Activated CD4-positive, alpha-beta memory T cell treated with anti-CD3 and anti-CD28 coated beads for 36 hours (primary cell): ENCODE measurements at regions of chr7 and their contacts with region 1.

Region 1: DNA sequence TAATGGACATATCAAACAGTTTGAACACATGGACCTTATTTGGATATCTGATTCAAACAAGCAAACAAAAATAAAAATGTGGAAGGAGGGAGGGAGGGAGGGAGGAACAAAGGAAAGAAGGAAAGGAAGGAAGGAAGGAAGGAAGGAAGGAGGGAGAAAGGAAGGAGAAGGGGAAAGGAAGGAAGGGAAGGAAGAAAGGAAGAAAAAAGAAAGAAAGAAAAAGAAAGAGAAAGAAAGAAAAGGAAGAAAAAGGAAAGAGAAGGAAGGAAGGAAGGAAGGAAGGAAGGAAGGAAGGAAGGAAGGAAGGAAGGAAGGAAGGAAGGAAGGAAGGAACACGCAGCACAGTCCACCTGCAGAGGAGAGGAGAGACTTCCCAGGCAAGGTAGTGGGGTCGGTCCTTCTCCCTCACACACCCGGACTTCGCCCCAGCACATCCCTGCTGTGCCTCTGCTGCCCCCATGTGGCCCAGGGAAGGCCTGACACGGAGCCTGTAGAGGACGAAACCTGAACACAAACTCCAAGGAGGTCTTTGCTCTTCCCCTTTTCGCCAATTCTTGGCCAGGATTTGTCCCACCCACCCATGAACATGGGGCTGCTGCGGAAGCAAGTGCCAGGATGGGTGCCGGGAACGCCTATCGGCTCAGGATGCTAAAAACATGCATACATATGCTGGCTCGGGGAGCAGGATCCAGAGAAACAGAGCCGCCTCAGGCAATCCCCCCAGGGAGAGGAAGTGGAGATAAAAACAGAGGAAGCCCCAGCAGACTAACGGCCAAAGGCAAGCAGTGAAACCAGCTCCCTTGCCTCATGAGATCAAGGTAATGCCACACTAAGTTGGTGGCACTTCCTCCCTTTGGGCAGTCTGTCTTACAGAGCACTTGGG is 52.3 kb upstream of the DGKI start:
- DNase-seq: peak; percentile 84
- H3K4me3 Mint-ChIP-seq: no peak overlapping the region
- H3K27ac Mint-ChIP-seq: no peak overlapping the region
- H3K4me1 Mint-ChIP-seq: peaks cover 33% of the 10 kb centered on the region
- H3K27me3 Mint-ChIP-seq: no peaks in the 10 kb centered on the region

Region 2: DNA sequence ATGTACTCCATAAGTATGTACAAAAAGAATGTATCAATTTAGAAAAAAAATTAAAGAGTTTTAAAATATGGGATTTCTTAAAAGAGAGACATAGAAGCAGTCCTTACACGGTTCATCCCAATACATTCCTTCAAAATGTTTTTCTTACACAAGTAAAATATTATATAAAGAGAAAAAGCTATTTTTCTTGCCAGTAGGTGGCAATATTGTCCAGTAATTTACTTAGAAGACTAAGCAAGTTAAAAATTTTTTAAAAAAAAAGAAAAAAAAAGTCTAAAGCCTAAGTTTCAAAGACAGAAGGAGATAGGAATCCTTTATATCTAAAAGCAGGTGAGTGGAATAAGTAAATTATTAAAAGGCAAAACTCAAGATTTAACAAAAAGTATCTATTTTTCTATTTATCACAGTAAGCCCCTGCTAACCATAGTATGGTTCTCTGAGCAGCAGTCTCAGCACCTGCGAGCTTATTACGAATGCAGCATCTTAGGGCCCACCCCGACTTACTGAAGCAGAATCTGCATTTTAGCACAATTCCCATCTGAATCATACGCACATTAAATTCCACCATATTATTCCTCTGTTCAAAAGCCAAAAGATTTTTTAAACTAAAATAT is 292.9 kb before region 1 on chr7:
- CTCF ChIA-PET with region 1: interaction called, 9 read pairs
- POLR2A ChIA-PET with region 1: no interaction called
- intact Hi-C with region 1: loop called (anchors 2 kb)
- DNase-seq: no peak
- H3K4me3 Mint-ChIP-seq: no peak overlapping the region
- H3K27ac Mint-ChIP-seq: no peak overlapping the region
- H3K4me1 Mint-ChIP-seq: no peaks in the 10 kb centered on the region
- H3K27me3 Mint-ChIP-seq: peaks cover 10% of the 10 kb centered on the region

Region 3: DNA sequence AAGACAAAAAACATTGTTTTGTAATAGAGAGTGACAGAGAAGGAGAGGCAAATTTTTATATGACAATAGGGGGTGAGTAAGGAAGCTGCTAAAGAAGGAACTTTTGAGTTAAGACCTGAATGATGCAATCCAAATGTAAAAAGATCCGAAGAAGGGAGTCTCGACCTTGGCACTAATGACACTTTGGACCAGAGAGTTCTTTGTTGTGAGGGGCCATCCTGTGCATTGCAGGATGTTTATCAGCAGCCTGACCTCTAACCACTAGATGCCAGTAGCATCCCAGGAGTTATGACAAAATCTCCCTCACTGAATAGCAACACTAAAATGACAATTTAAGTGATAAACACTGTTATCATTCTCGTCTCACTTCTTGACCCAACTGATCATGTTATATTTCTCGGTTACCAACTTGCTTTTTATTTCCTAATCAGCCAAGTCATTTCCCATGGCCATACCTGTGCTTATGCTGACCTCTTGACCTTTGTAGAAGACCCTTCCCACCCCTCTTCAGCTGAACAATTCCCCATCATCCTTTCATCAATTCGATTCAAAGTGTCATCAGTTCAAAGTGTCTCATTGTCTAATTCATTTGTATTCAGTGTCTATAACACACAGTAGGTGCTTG is 82.3 kb before region 1 on chr7:
- CTCF ChIA-PET with region 1: no interaction called
- POLR2A ChIA-PET with region 1: no interaction called
- intact Hi-C with region 1: loop called (anchors 5 kb)
- DNase-seq: no peak
- H3K4me3 Mint-ChIP-seq: no peak overlapping the region
- H3K27ac Mint-ChIP-seq: no peak overlapping the region
- H3K4me1 Mint-ChIP-seq: no peaks in the 10 kb centered on the region
- H3K27me3 Mint-ChIP-seq: peaks cover 17% of the 10 kb centered on the region

Region 4: GRCh38 chr7:137916564-137916963 is 17.5 kb after region 1 on chr7:
- CTCF ChIA-PET with region 1: interaction called, 33 read pairs
- POLR2A ChIA-PET with region 1: no interaction called
- intact Hi-C with region 1: no loop called
- DNase-seq: no peak
- H3K4me3 Mint-ChIP-seq: no peak overlapping the region
- H3K27ac Mint-ChIP-seq: no peak overlapping the region
- H3K4me1 Mint-ChIP-seq: peaks cover 16% of the 10 kb centered on the region
- H3K27me3 Mint-ChIP-seq: no peaks in the 10 kb centered on the region

Region 5: DNA sequence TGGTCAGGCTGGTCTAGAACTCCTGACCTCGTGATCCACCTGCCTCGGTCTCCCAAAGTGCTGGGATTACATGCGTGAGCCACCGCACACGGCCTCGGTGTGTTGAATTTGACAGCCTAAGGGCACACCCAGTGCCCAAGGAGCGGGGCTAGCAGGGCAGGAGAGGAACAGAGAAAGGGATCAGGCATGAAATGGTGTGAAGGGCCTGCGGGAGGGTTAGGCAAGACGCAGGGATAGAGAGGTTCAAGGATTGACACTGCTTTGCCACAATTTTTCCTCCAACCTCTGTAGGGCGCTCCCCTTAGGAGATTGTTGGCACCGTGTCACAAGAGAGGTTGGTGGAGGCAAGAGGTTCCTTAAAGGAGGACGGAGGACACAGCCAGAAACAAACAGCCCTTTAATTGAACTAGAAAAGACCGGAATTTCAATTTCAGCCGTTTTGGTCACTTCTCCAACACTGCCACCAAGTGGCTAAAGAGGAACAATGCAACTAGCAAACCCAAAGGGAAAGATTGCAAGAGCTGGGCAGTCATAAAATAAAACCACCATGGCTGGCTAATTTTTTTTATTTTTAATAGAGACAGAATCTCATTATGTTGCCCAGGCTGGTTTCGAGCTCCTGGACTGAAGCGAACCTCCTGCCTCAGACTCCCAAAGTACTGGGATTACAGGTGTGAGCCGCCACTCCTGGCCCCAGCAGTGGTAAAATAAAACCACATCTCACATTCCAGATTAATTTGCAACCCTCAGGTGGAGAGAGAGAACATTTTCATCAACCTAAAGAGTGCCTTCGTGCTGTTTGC is 109.7 kb after region 1 on chr7:
- CTCF ChIA-PET with region 1: interaction called, 433 read pairs
- POLR2A ChIA-PET with region 1: no interaction called
- intact Hi-C with region 1: loop called (anchors 1 kb)
- DNase-seq: peak; percentile 37
- H3K4me3 Mint-ChIP-seq: no peak overlapping the region
- H3K27ac Mint-ChIP-seq: no peak overlapping the region
- H3K4me1 Mint-ChIP-seq: peaks cover 4% of the 10 kb centered on the region
- H3K27me3 Mint-ChIP-seq: no peaks in the 10 kb centered on the region

Region 6: GRCh38 chr7:138195151-138195585 is 296.1 kb after region 1 on chr7:
- CTCF ChIA-PET with region 1: no interaction called
- POLR2A ChIA-PET with region 1: no interaction called
- intact Hi-C with region 1: no loop called
- DNase-seq: no peak
- H3K4me3 Mint-ChIP-seq: no peak overlapping the region
- H3K27ac Mint-ChIP-seq: no peak overlapping the region
- H3K4me1 Mint-ChIP-seq: no peaks in the 10 kb centered on the region
- H3K27me3 Mint-ChIP-seq: peaks cover 8% of the 10 kb centered on the region

Region 7: DNA sequence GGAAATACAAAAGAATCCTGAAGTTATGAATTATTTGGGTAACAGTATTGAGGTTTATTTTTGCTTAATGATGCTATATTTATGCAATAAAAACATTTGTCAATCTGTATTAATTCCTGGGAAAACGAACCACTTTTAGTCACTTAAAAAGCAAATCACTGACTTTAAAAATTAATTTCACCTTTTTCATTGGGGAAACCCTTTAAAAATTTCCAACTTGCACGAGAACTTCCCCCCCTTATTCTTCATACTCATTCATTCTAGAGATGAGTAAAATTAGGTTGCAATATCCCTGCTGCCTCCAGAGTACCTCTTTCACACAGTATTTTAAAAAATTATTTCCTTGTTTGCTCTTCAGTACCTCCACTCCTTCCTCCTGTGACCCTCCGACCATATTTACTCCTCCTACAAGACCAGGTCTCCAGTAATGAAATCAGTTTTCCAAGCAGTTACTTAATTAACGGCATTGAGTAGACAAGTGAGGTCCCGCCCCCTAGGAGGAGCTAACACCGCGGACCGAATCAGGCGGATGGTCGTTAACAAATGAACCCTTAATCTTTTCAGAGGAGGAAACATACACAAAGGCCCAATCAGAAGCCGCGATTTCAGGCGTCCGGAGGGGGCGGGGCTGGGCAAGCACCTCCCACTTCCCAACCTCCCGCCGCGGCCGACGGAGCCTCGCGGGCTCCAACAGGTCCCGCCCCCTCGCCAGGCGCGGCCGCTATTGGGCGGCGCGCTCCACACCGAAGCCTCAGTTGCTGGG is 560.5 kb after region 1 on chr7:
- CTCF ChIA-PET with region 1: interaction called, 3 read pairs
- POLR2A ChIA-PET with region 1: no interaction called
- intact Hi-C with region 1: loop called (anchors 10 kb)
- DNase-seq: peak; percentile 98
- H3K4me3 Mint-ChIP-seq: peak overlapping the region; percentile 90
- H3K27ac Mint-ChIP-seq: peak overlapping the region; percentile 65
- H3K4me1 Mint-ChIP-seq: peaks cover 25% of the 10 kb centered on the region
- H3K27me3 Mint-ChIP-seq: no peaks in the 10 kb centered on the region